A673 (cell line): ENCODE measurements at regions of chr10 and their contacts with region 1.

Region 1: DNA sequence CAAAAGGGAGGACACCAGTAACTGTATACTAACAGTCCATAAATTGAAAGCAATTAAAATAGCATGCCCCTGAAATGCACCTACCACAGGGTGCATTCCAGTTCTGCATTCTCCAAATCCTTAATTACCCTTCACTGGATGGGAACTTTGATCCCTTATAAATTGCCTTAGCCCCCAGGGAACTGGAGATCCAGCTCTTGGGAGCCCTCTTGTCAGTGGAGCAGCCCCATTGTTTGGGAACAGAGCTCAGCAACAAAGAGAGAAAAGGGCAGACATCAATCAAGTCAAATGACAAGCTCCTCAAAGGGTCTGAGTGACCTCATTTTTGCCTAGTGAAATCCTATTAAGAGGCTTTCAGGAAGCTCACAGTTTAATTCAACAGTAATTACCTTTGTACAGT is 472.6 kb downstream of the XPNPEP1 start:
- DNase-seq: peak; percentile 82
- H3K4me3 ChIP-seq: no peak overlapping the region
- H3K27ac ChIP-seq: no peak overlapping the region
- H3K4me1 ChIP-seq: peaks cover 42% of the 10 kb centered on the region
- H3K27me3 ChIP-seq: no peaks in the 10 kb centered on the region
- CTCF ChIP-seq: no peak

Region 2: DNA sequence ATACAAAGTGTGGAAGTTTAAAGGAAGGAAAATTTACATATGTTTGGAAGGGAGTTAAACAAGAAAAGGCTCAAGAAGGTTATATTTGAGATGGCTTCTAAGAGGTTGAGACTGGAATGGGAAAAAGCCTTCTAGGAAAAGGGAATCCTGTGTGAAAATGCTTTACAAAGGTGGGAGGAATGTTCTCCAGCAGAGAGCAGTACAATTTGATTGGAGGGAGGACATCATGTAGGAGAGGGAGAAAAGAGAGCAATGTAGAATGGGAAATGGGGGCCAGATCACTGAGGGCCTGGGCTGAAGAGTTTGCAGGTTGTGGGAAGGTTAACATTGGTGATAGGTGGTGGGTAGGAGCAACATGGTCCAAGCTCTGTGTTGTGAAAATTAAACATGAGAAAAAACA is 105.7 kb after region 1 on chr10:
- CTCF ChIA-PET with region 1: no interaction called
- POLR2A ChIA-PET with region 1: no interaction called
- intact Hi-C with region 1: no loop called
- DNase-seq: no peak
- H3K4me3 ChIP-seq: no peak overlapping the region
- H3K27ac ChIP-seq: no peak overlapping the region
- H3K4me1 ChIP-seq: no peaks in the 10 kb centered on the region
- H3K27me3 ChIP-seq: no peaks in the 10 kb centered on the region
- CTCF ChIP-seq: no peak

Region 3: GRCh38 chr10:109773288-109774120 is 322.8 kb after region 1 on chr10:
- CTCF ChIA-PET with region 1: no interaction called
- POLR2A ChIA-PET with region 1: no interaction called
- intact Hi-C with region 1: loop called (anchors 5 kb)
- DNase-seq: peak; percentile 71
- H3K4me3 ChIP-seq: no peak overlapping the region
- H3K27ac ChIP-seq: no peak overlapping the region
- H3K4me1 ChIP-seq: peaks cover 17% of the 10 kb centered on the region
- H3K27me3 ChIP-seq: no peaks in the 10 kb centered on the region
- CTCF ChIP-seq: peak; percentile 79